ENCODE measurements at regions of chr12 and their contacts with region 1.

Region 1: DNA sequence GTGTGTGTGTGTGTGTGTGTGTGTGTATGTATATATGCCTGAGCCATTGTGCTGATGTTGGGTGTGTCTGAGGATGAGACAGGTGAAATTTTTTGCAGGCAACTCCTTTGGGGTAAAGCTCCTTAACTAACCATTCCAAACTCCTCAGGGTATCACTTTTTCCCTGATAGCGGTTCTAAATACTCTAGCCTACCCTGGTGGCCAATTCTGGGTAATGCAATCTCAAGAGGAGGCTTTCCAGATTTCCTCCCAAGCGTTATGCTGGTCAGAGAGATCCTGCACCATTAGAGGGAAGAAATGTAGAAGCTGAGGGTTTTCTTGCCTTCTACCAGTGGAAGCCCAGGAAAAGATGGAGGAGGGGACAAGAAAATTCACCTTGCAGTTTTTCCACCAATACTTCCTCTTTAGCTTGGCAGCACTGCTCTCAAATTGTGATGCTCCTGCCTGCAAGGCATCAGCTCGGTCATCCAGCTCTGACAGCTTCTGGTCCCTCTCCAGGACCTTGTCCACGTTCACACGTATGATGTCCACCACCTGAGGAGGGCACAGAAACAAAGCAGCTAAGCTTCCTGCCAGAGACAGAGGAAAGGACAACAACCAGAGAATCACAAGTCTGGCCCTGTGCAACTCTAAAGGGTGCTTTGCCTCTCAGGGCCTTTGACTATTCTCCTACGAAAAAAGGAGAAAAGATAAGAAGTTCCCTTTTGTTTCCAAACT is 4.9 kb downstream of the VAMP1 start:
- DNase-seq: no peak
- ATAC-seq: peak; percentile 64

Region 2: GRCh38 chr12:6335451-6336078 is 130.1 kb before region 1 on chr12:
- intact Hi-C with region 1: loop called (anchors 10 kb)
- DNase-seq: peak; percentile 84
- ATAC-seq: peak; percentile 49

Region 3: GRCh38 chr12:6423267-6424007 is 42.2 kb before region 1 on chr12:
- intact Hi-C with region 1: loop called (anchors 5 kb)
- DNase-seq: peak; percentile 89
- ATAC-seq: peak; percentile 95

Region 4: GRCh38 chr12:6653987-6654386 is 188.4 kb after region 1 on chr12:
- intact Hi-C with region 1: no loop called
- DNase-seq: no peak
- ATAC-seq: no peak